Caco-2 (cell line): ENCODE measurements at regions of chr3 and their contacts with region 1.

Region 1: DNA sequence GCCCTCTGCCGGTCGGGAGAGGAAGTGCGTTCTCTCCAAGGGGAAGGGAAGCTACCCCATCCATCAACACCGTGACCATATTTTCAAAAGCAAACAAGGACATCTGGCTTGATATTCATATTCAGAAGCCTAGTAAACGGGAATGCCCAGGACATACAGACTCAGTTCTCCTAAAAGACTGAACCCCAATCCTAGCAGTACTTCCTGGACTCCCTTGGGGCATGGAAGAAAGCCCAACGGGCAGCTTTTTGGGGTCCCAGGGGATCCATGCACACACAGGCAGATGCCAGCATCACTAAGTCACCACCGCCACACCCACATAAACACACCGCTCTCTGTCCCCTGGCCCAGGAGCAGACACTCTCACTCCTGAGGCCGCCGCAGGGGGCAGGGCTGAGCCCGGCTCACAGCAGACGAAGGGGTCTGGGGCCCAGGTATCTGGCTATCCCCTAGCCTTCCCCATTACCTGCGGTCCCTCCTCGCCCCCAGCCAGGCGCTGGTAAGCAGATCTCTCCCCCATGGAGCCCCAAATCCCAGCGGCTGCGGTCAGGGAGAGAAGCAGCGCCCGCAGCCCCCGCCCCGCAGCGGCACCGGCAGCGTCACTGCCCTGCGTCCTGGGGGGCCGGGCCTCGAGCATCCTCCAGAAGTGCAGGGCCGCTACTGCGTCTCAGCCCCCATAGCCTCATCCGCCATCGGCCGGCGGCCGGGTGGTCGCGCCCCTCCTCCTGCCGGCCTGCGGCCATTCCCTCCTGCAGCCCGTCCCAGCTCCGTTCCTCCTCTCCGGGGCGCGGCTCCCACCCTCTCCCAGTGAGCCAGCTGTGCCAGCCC is 13.4 kb downstream of the TNK2 start:
- DNase-seq: peak; percentile 75
- H3K4me3 ChIP-seq: peak overlapping the region; percentile 77
- H3K4me3 Mint-ChIP-seq: peak overlapping the region; percentile 85
- H3K27ac Mint-ChIP-seq: peak overlapping the region; percentile 75
- H3K4me1 ChIP-seq: peaks cover 7% of the 10 kb centered on the region
- H3K4me1 Mint-ChIP-seq: peaks cover 26% of the 10 kb centered on the region
- H3K27me3 ChIP-seq: no peaks in the 10 kb centered on the region
- H3K27me3 Mint-ChIP-seq: no peaks in the 10 kb centered on the region
- CTCF ChIP-seq: peak; percentile 87 to 96

Region 2: GRCh38 chr3:195850857-195851543 is 44.0 kb before region 1 on chr3:
- CTCF ChIA-PET with region 1: interaction called, 11 read pairs
- POLR2A ChIA-PET with region 1: no interaction called
- intact Hi-C with region 1: no loop called
- DNase-seq: peak; percentile 88
- H3K4me3 ChIP-seq: no peak overlapping the region
- H3K4me3 Mint-ChIP-seq: no peak overlapping the region
- H3K27ac Mint-ChIP-seq: no peak overlapping the region
- H3K4me1 ChIP-seq: peaks cover 13% of the 10 kb centered on the region; the same call in 1 of the 2 replicates
- H3K4me1 Mint-ChIP-seq: no peaks in the 10 kb centered on the region
- H3K27me3 ChIP-seq: no peaks in the 10 kb centered on the region
- H3K27me3 Mint-ChIP-seq: no peaks in the 10 kb centered on the region
- CTCF ChIP-seq: peak; percentile 99 to 100

Region 3: GRCh38 chr3:195863121-195864006 is 31.6 kb before region 1 on chr3:
- CTCF ChIA-PET with region 1: interaction called, 17 read pairs
- POLR2A ChIA-PET with region 1: no interaction called
- intact Hi-C with region 1: loop called (anchors 1 kb)
- DNase-seq: peak; percentile 72 to 80
- H3K4me3 ChIP-seq: no peak overlapping the region
- H3K4me3 Mint-ChIP-seq: no peak overlapping the region
- H3K27ac Mint-ChIP-seq: no peak overlapping the region
- H3K4me1 ChIP-seq: no peaks in the 10 kb centered on the region; the same call in 1 of the 2 replicates
- H3K4me1 Mint-ChIP-seq: peaks cover 6% of the 10 kb centered on the region
- H3K27me3 ChIP-seq: no peaks in the 10 kb centered on the region
- H3K27me3 Mint-ChIP-seq: no peaks in the 10 kb centered on the region
- CTCF ChIP-seq: peak; percentile 66 to 84

Region 4: DNA sequence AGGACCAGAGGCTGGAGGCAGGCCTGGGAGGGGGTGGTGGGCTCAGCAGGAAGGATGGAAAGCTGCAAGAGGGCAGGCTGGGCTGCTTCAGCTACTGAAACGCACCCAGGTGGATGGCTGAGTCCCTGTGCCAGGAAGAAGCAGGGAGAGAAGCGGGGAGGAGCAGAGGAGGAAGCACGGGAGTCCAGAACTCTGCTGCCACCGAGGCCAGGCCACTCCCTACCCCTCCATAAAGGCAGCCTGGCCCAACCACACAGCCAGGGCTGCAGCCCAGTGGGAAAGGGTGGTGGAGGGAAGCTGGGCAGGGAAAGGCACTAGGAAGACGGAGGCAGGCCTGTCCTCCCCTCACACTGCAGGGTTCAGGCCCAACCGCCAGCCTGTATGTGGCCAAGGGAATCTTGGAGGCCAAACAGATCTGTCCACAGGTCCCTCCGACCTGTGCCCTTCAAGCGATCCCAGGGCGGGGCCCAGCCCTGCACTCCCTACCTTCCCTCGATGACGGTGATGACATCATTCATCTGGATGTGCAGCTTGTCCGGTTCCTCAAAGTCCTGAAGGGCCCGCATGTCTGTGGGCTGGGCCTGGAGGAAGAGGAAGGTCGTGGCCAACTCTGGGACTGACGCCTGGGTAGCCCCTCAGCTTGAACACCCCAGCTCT is 17.1 kb before region 1 on chr3:
- CTCF ChIA-PET with region 1: no interaction called
- POLR2A ChIA-PET with region 1: no interaction called
- intact Hi-C with region 1: no loop called
- DNase-seq: no peak
- H3K4me3 ChIP-seq: no peak overlapping the region
- H3K4me3 Mint-ChIP-seq: no peak overlapping the region
- H3K27ac Mint-ChIP-seq: no peak overlapping the region
- H3K4me1 ChIP-seq: no peaks in the 10 kb centered on the region
- H3K4me1 Mint-ChIP-seq: no peaks in the 10 kb centered on the region
- H3K27me3 ChIP-seq: no peaks in the 10 kb centered on the region
- H3K27me3 Mint-ChIP-seq: no peaks in the 10 kb centered on the region
- CTCF ChIP-seq: no peak

Region 5: DNA sequence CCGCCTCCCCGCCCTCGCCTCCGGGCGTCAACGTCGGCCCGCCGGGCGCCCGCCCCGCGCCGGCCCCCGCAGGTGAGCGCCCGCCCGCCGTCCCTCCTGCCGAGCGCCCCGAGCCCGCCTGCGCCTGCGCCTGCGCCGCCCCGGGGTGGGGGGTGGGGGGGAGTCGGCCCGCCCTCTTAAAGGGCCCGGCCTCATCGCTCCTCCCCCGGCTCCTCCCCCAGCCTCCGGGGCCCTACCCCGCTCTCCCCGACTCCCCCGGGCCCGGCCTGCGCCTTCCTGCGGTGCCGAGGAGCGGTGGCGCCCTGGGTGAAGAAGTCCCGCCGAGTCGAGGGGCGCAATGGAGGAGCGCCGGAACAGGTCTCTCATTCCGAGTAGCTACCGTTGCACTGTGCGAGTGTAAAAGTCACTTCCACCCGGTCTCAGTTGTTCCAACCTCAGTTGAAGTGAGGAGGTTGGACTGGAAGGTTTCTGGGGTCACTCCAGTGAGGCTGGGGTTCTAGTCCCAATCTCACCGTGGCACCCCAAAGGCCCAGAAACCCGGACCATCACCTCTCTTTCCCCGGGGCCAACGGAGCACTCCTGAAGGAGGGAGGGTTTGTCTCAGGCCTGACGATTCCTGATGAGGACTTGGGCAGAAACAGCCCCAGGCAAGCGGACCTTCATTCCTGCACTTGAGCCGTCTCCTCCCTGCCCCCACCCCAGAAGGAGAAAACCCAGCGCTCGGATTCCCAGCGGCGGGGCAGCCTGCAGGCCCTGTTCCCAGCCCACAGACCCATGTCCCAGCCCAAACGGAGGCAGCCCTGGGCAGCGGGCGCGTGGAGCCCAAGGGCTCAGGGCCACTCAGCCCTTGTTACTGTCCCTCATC is 14.9 kb after region 1 on chr3:
- CTCF ChIA-PET with region 1: interaction called, 23 read pairs
- POLR2A ChIA-PET with region 1: no interaction called
- intact Hi-C with region 1: loop called (anchors 1 kb)
- DNase-seq: peak; percentile 86 to 88
- H3K4me3 ChIP-seq: peak overlapping the region; percentile 74
- H3K4me3 Mint-ChIP-seq: peak overlapping the region; percentile 86
- H3K27ac Mint-ChIP-seq: no peak overlapping the region
- H3K4me1 ChIP-seq: peaks cover 30% of the 10 kb centered on the region
- H3K4me1 Mint-ChIP-seq: peaks cover 30% of the 10 kb centered on the region
- H3K27me3 ChIP-seq: no peaks in the 10 kb centered on the region
- H3K27me3 Mint-ChIP-seq: no peaks in the 10 kb centered on the region
- CTCF ChIP-seq: no peak

Region 6: GRCh38 chr3:196169836-196170240 is 274.8 kb after region 1 on chr3:
- CTCF ChIA-PET with region 1: no interaction called
- POLR2A ChIA-PET with region 1: no interaction called
- intact Hi-C with region 1: no loop called
- DNase-seq: no peak
- H3K4me3 ChIP-seq: no peak overlapping the region
- H3K4me3 Mint-ChIP-seq: no peak overlapping the region
- H3K27ac Mint-ChIP-seq: no peak overlapping the region
- H3K4me1 ChIP-seq: no peaks in the 10 kb centered on the region
- H3K4me1 Mint-ChIP-seq: no peaks in the 10 kb centered on the region
- H3K27me3 ChIP-seq: no peaks in the 10 kb centered on the region
- H3K27me3 Mint-ChIP-seq: no peaks in the 10 kb centered on the region
- CTCF ChIP-seq: no peak